HEK293 (cell line): ENCODE measurements at regions of chr5 and their contacts with region 1.

Region 1: GRCh38 chr5:141326088-141326854 is 4.0 kb upstream of the PCDHGA1 start:
- H3K4me3 ChIP-seq: no peak overlapping the region
- H3K27ac ChIP-seq: no peak overlapping the region
- H3K4me1 ChIP-seq: no peaks in the 10 kb centered on the region
- CTCF ChIP-seq: no peak

Region 2: DNA sequence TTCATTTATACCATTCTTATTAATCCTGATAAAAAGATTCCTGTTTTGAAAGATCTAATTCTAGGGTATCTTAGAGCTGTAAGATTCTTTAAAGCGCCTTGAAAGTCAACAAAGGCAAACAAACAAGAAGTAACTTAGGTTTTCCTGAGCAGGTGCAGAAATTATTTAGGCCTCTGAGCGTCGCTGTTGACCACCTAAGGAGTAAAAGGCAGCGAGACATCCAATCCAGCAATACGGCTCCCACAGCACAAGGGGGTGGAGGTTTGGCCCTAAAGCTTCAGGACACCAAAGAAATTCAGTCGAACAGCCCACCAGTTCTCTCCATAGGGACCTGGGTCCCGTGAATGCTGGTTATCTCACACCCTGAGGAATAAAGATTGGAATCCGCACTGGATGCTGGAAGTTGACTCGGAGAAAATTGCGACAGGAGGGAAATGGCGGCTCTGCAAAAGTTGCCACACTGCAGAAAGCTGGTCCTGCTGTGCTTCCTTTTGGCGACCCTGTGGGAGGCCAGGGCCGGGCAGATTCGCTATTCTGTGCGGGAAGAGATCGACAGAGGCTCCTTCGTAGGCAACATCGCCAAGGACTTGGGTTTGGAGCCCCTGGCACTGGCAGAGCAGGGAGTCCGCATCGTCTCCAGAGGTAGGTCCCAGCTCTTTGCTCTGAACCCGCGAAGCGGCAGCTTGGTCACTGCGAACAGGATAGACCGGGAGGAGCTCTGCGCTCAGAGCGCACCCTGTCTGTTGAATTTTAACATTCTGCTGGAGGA is 12.5 kb after region 1 on chr5 and contains the start of gene PCDHGA2:
- CTCF ChIA-PET with region 1: interaction called, 41 read pairs
- POLR2A ChIA-PET with region 1: interaction called, 19 read pairs
- H3K4me3 ChIP-seq: no peak within 1 kb of the TSS
- H3K27ac ChIP-seq: no peak within 1 kb of the TSS
- H3K4me1 ChIP-seq: no peaks in the 10 kb centered on the region
- CTCF ChIP-seq: no peak